A549 (cell line): ENCODE measurements at regions of chr20 and their contacts with region 1.

Region 1: GRCh38 chr20:17617551-17618223 is 47.8 kb downstream of the DSTN start:
- DNase-seq: peak; percentile 74 to 83
- ATAC-seq: peak; percentile 64 to 72
- H3K4me3 ChIP-seq: no peak overlapping the region
- H3K27ac ChIP-seq: no peak overlapping the region
- H3K4me1 ChIP-seq: peaks cover 12% of the 10 kb centered on the region; the same call in 2 of the 3 replicates
- CTCF ChIP-seq: peak; percentile 87
- EP300 ChIP-seq: no peak
- POLR2A ChIP-seq: no peak
- RAD21 ChIP-seq: peak; percentile 97 to 99

Region 2: GRCh38 chr20:17518339-17519052 is 99.2 kb before region 1 on chr20:
- CTCF ChIA-PET with region 1: interaction called, 43 read pairs
- POLR2A ChIA-PET with region 1: no interaction called
- DNase-seq: no peak
- ATAC-seq: peak in 1 of 2 experiments; percentile 60; a peak in 3 of 6 replicates
- H3K4me3 ChIP-seq: no peak overlapping the region
- H3K27ac ChIP-seq: no peak overlapping the region
- H3K4me1 ChIP-seq: no peaks in the 10 kb centered on the region
- CTCF ChIP-seq: no peak
- EP300 ChIP-seq: no peak
- POLR2A ChIP-seq: no peak
- RAD21 ChIP-seq: no peak

Region 3: DNA sequence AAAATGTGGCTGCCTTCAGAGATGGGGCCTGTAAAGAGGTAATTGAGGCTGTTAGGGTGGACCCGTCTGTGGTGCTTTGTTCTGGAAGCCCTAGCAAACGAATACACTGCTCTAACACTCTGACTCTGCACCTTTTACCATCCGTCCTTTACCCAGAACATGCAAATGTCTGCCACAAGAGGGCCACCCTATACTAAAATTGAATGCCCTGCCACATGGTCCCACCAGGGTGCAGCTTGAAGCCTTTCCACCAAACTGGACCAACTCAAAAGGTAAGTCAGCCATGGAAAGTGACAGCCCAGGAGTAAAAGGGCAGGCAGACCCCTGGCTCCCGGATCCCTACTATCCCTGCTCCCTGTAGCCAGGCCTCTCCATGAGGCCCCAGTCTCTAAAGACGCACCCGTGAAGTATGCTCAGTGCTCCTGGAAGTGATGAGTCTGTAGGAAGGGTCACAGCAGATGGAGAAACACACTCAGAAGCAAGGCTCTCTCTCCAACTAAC is 80.7 kb before region 1 on chr20:
- CTCF ChIA-PET with region 1: interaction called, 501 read pairs
- POLR2A ChIA-PET with region 1: no interaction called
- DNase-seq: peak; percentile 90 to 97
- ATAC-seq: peak; percentile 98
- H3K4me3 ChIP-seq: no peak overlapping the region
- H3K27ac ChIP-seq: peak overlapping the region; percentile 60 to 80
- H3K4me1 ChIP-seq: peaks cover 41% of the 10 kb centered on the region
- CTCF ChIP-seq: peak; percentile 99
- EP300 ChIP-seq: no peak
- POLR2A ChIP-seq: no peak
- RAD21 ChIP-seq: peak; percentile 100

Region 4: DNA sequence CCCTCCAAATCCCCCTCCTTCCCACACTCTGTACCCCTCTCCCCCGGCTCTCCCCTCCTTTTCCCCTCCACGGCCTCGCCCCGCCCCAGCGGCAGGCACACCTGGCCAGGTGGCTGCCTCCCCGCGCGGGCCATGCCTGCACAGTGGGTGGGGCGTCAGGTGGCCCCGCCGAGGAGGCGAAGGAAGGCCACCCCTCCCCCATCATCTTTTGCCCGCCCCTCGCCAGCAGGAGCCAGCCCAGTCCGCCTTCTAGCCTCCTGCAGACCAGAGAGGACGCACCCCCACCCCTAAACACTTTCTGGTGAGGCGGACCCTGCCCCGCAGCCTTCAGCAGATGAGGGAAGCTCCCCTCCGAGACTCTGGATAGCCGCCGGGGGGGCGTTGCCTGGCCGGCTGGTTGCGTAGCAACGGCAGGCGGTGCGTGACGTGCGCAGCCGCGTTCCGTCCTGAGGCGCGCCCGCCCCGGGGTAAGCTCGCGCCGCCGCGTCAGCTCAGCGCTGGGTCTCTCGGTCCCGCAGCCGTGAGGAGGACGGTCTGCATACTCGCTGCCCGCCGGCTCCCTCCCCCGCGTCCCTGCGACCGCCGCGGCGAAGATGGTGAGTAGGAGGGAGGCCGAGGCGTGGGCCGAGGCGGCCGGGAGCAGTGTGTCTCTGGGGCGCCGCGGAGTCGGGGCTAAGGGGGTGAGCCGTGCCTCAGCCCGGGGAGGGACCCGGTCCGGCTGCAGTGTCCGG is 47.9 kb before region 1 on chr20 and contains the start of gene DSTN:
- CTCF ChIA-PET with region 1: interaction called, 108 read pairs
- POLR2A ChIA-PET with region 1: interaction called, 5 read pairs
- DNase-seq: peak; percentile 96 to 99
- ATAC-seq: peak; percentile 85 to 88
- H3K4me3 ChIP-seq: peak within 1 kb of the TSS; percentile 87
- H3K27ac ChIP-seq: peak within 1 kb of the TSS; percentile 91 to 96
- H3K4me1 ChIP-seq: peaks cover 51% of the 10 kb centered on the region
- CTCF ChIP-seq: no peak
- EP300 ChIP-seq: peak in 1 of 2 experiments; percentile 16; a peak in 1 of 5 replicates
- POLR2A ChIP-seq: peak; percentile 98
- RAD21 ChIP-seq: peak in 1 of 2 experiments; percentile 9; a peak in 1 of 5 replicates
- polyA plus RNA-seq, gene DSTN: 425 and 544 TPM in 2 replicates

Region 5: DNA sequence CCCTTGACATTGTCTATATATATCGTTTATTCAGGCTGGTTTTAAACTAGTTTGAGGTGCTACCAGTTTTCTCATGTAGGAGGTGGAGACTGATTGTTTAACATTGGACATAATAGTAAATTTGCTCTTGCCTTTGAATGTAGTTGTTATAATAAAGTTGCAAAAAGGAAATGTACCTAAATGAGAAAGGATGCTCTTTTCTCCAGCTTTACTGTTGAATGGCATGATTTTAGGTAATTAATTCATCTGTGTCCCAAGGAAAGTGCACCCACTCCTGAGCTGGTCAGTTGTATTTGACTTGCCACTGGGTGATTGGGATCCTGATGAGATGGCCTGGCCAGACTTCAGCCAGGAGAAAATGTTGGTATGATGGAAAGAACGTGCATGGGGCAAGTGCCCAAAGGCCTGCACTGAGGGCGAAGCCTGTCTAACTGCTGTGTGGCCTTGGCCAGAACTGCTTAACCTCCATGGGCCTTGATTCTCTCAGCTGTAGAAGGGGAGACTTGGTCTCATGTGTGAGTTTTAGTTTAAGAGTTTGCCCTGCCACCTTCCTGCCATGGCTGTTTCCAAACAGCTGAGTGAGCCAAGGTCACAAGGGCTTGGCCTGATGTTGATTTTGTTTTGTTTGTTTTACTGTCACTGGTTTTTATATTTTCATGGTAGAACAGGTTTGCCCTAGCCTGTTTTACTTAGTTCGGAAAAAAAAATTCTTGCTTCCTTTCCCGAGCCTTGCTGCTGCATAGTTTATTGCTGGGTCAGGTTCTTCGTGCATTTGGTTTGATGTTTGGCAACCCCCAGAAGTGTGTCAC is 12.6 kb before region 1 on chr20:
- CTCF ChIA-PET with region 1: interaction called, 26 read pairs
- POLR2A ChIA-PET with region 1: no interaction called
- DNase-seq: no peak
- ATAC-seq: peak; percentile 20 to 34; a peak in 4 of 6 replicates
- H3K4me3 ChIP-seq: no peak overlapping the region
- H3K27ac ChIP-seq: peak overlapping the region; percentile 4 to 55; a peak in 4 of 6 replicates
- H3K4me1 ChIP-seq: peaks cover 64% of the 10 kb centered on the region
- CTCF ChIP-seq: no peak
- EP300 ChIP-seq: no peak
- POLR2A ChIP-seq: no peak
- RAD21 ChIP-seq: no peak

Region 6: GRCh38 chr20:17648791-17649730 is 31.4 kb after region 1 on chr20:
- CTCF ChIA-PET with region 1: interaction called, 22 read pairs
- POLR2A ChIA-PET with region 1: no interaction called
- DNase-seq: peak; percentile 26 to 62
- ATAC-seq: peak; percentile 51 to 74; a peak in 3 of 6 replicates
- H3K4me3 ChIP-seq: no peak overlapping the region
- H3K27ac ChIP-seq: no peak overlapping the region
- H3K4me1 ChIP-seq: peaks cover 20% of the 10 kb centered on the region
- CTCF ChIP-seq: peak; percentile 50
- EP300 ChIP-seq: no peak
- POLR2A ChIP-seq: no peak
- RAD21 ChIP-seq: peak; percentile 32 to 34; a peak in 3 of 5 replicates